H1 (cell line): ENCODE measurements at regions of chr7 and their contacts with region 1.

Region 1: GRCh38 chr7:38660427-38661099 is 29.4 kb upstream of the AMPH start:
- DNase-seq: no peak
- H3K4me3 ChIP-seq: no peak overlapping the region
- H3K27ac ChIP-seq: no peak overlapping the region
- H3K4me1 ChIP-seq: no peaks in the 10 kb centered on the region
- H3K27me3 ChIP-seq: no peaks in the 10 kb centered on the region
- CTCF ChIP-seq: peak; percentile 52 to 93 (median 80)
- EP300 ChIP-seq: no peak
- POLR2A ChIP-seq: no peak
- RAD21 ChIP-seq: peak; percentile 83 to 93

Region 2: GRCh38 chr7:38398725-38399321 is 261.7 kb before region 1 on chr7:
- CTCF ChIA-PET with region 1: interaction called, 15 read pairs
- POLR2A ChIA-PET with region 1: no interaction called
- DNase-seq: peak in 1 of 2 experiments; percentile 59
- H3K4me3 ChIP-seq: no peak overlapping the region
- H3K27ac ChIP-seq: no peak overlapping the region
- H3K4me1 ChIP-seq: no peaks in the 10 kb centered on the region
- H3K27me3 ChIP-seq: no peaks in the 10 kb centered on the region
- CTCF ChIP-seq: peak; percentile 65 to 83 (median 77)
- EP300 ChIP-seq: no peak
- POLR2A ChIP-seq: no peak
- RAD21 ChIP-seq: peak; percentile 74 to 77

Region 3: GRCh38 chr7:38411404-38411803 is 249.2 kb before region 1 on chr7:
- CTCF ChIA-PET with region 1: interaction called, 10 read pairs
- POLR2A ChIA-PET with region 1: no interaction called
- DNase-seq: no peak
- H3K4me3 ChIP-seq: no peak overlapping the region
- H3K27ac ChIP-seq: no peak overlapping the region
- H3K4me1 ChIP-seq: peaks cover 0 to 2% (median 0%) of the 10 kb centered on the region in 4 experiments; a peak in 1 of 7 replicates
- H3K27me3 ChIP-seq: no peaks in the 10 kb centered on the region
- CTCF ChIP-seq: peak in 2 of 3 experiments; percentile 55 to 68; a peak in 2 of 4 replicates
- EP300 ChIP-seq: no peak
- POLR2A ChIP-seq: no peak
- RAD21 ChIP-seq: peak; percentile 29 to 35

Region 4: GRCh38 chr7:38438970-38439369 is 221.6 kb before region 1 on chr7:
- CTCF ChIA-PET with region 1: interaction called, 48 read pairs
- POLR2A ChIA-PET with region 1: no interaction called
- DNase-seq: no peak
- H3K4me3 ChIP-seq: no peak overlapping the region
- H3K27ac ChIP-seq: no peak overlapping the region
- H3K4me1 ChIP-seq: no peaks in the 10 kb centered on the region
- H3K27me3 ChIP-seq: no peaks in the 10 kb centered on the region
- CTCF ChIP-seq: no peak
- EP300 ChIP-seq: no peak
- POLR2A ChIP-seq: no peak
- RAD21 ChIP-seq: no peak

Region 5: DNA sequence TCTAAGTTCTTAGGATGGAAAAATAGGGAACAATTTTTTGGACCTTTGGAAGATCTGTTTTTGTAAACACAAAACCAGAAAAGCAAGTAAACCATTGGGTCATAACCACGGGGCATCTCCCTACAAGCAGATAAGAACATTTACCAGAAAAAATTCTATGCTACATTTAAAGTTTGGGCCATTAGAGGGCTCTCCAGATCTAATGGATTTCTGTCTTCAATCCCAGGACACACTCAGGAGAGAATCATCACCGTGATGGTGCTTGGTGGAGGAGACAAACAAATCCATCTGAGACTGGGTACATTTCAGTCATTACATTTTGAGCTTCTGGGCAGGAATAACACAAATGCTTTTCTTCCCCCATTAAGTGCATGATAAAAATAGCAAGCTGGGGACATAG is 208.7 kb before region 1 on chr7:
- CTCF ChIA-PET with region 1: interaction called, 20 read pairs
- POLR2A ChIA-PET with region 1: no interaction called
- DNase-seq: no peak
- H3K4me3 ChIP-seq: no peak overlapping the region
- H3K27ac ChIP-seq: no peak overlapping the region
- H3K4me1 ChIP-seq: no peaks in the 10 kb centered on the region; a peak in 1 of 7 replicates
- H3K27me3 ChIP-seq: no peaks in the 10 kb centered on the region
- CTCF ChIP-seq: peak in 2 of 3 experiments; percentile 50 to 54; a peak in 2 of 4 replicates
- EP300 ChIP-seq: no peak
- POLR2A ChIP-seq: no peak
- RAD21 ChIP-seq: peak; percentile 72 to 78

Region 6: DNA sequence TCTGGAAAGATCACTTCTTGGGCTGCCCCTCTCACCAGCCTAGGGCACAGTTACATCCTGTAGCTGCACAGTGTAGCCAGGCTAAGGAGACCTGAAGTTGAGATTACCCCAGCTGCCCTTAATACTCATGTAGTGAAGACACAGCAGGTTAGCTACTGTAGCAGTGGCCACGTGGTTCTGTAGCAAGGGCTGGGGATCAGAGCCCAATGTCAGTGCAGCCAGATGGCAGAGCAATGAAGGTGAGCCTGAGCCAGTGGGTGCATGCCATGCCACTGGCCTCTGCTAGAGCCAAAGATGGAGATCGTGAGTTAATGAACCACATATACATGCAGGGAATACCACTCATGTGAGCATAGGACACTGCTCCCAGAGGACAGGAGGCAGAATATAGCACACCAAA is 44.9 kb before region 1 on chr7:
- CTCF ChIA-PET with region 1: interaction called, 10 read pairs
- POLR2A ChIA-PET with region 1: no interaction called
- DNase-seq: no peak
- H3K4me3 ChIP-seq: no peak overlapping the region
- H3K27ac ChIP-seq: no peak overlapping the region
- H3K4me1 ChIP-seq: no peaks in the 10 kb centered on the region
- H3K27me3 ChIP-seq: no peaks in the 10 kb centered on the region
- CTCF ChIP-seq: no peak
- EP300 ChIP-seq: no peak
- POLR2A ChIP-seq: no peak
- RAD21 ChIP-seq: no peak

Region 7: GRCh38 chr7:38671911-38672905 is 11.6 kb after region 1 on chr7:
- CTCF ChIA-PET with region 1: interaction called, 12 read pairs
- POLR2A ChIA-PET with region 1: no interaction called
- DNase-seq: no peak
- H3K4me3 ChIP-seq: no peak overlapping the region
- H3K27ac ChIP-seq: no peak overlapping the region
- H3K4me1 ChIP-seq: no peaks in the 10 kb centered on the region
- H3K27me3 ChIP-seq: no peaks in the 10 kb centered on the region
- CTCF ChIP-seq: no peak
- EP300 ChIP-seq: no peak
- POLR2A ChIP-seq: no peak
- RAD21 ChIP-seq: no peak